ENCODE measurements at regions of chr2 and their contacts with region 1.

Region 1: DNA sequence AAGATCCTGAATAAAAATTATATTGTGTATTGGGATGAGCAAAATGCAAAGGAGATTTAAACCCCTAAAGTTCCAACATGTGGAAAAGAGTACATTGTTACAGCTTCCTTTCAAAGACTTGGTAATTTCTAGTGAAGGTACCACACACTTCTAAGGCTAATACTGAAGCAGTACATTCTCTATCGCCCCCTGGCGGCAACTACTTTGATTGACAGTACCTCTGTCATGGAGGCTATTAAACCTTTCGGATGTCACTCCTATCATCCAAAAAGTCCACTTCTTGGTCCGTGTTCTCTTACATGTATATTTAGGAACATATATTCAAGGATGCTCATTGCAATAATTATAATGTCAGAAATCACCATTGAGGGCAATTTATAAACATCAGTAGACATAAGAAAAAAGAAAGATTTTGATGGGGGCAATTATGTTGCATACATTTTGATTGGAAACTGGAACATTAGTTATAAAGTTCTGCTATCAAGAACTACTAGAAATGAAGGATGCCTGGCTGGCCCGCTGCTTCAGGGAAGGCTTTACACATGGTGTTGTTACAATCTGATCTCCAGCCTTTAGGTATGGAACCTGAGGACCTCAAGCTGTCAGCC is 601.6 kb downstream of the CPS1 start:
- DNase-seq: peak; percentile 89
- ATAC-seq: peak; percentile 90
- H3K4me3 Mint-ChIP-seq: no peak overlapping the region
- H3K27ac Mint-ChIP-seq: no peak overlapping the region
- H3K4me1 Mint-ChIP-seq: no peaks in the 10 kb centered on the region
- H3K27me3 Mint-ChIP-seq: no peaks in the 10 kb centered on the region
- CTCF ChIP-seq: peak; percentile 88

Region 2: GRCh38 chr2:210577263-210578071 is 580.5 kb before region 1 on chr2:
- CTCF ChIA-PET with region 1: no interaction called
- POLR2A ChIA-PET with region 1: no interaction called
- intact Hi-C with region 1: loop called (anchors 5 kb)
- DNase-seq: no peak
- ATAC-seq: peak; percentile 61
- H3K4me3 Mint-ChIP-seq: no peak overlapping the region
- H3K27ac Mint-ChIP-seq: no peak overlapping the region
- H3K4me1 Mint-ChIP-seq: no peaks in the 10 kb centered on the region
- H3K27me3 Mint-ChIP-seq: peaks cover 3% of the 10 kb centered on the region
- CTCF ChIP-seq: peak; percentile 81

Region 3: GRCh38 chr2:211141646-211142045 is 16.3 kb before region 1 on chr2:
- CTCF ChIA-PET with region 1: no interaction called
- POLR2A ChIA-PET with region 1: no interaction called
- intact Hi-C with region 1: no loop called
- DNase-seq: no peak
- ATAC-seq: no peak
- H3K4me3 Mint-ChIP-seq: no peak overlapping the region
- H3K27ac Mint-ChIP-seq: no peak overlapping the region
- H3K4me1 Mint-ChIP-seq: no peaks in the 10 kb centered on the region
- H3K27me3 Mint-ChIP-seq: no peaks in the 10 kb centered on the region
- CTCF ChIP-seq: no peak

Region 4: GRCh38 chr2:211175956-211176355 is 18.0 kb after region 1 on chr2:
- CTCF ChIA-PET with region 1: no interaction called
- POLR2A ChIA-PET with region 1: no interaction called
- intact Hi-C with region 1: no loop called
- DNase-seq: no peak
- ATAC-seq: no peak
- H3K4me3 Mint-ChIP-seq: no peak overlapping the region
- H3K27ac Mint-ChIP-seq: no peak overlapping the region
- H3K4me1 Mint-ChIP-seq: no peaks in the 10 kb centered on the region
- H3K27me3 Mint-ChIP-seq: no peaks in the 10 kb centered on the region
- CTCF ChIP-seq: no peak